ENCODE measurements at regions of chr4 and their contacts with region 1.

Region 1: DNA sequence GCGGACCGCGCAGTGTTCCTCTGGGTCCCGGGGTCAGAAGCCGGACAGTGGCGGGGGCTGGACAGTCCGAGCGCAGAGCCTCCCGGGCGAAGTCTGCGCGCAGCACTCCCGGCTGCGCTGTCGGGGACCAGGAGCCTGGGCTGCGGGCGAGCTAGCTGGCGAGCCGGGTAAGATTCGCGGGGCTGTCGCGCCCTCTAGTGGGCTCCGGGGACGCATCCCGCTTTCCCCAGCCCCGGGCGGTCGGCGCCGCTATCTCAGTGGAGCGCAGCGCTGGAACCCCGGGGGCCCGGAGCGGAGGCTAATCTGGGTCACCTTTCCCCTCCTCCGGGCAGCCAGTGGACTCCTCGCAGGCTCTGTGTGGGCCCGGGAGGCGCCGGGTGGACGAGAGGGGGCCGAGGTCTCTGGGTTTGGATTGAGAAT is 4.2 kb downstream of the PDGFRA start:
- DNase-seq: no peak
- H3K4me3 ChIP-seq: peak overlapping the region; percentile 93
- CTCF ChIP-seq: peak; percentile 86

Region 2: GRCh38 chr4:53196882-53197771 is 1036.2 kb before region 1 on chr4:
- CTCF ChIA-PET with region 1: interaction called, 64 read pairs
- POLR2A ChIA-PET with region 1: no interaction called
- DNase-seq: peak; percentile 56
- H3K4me3 ChIP-seq: peak overlapping the region; percentile 37
- CTCF ChIP-seq: peak; percentile 48

Region 3: DNA sequence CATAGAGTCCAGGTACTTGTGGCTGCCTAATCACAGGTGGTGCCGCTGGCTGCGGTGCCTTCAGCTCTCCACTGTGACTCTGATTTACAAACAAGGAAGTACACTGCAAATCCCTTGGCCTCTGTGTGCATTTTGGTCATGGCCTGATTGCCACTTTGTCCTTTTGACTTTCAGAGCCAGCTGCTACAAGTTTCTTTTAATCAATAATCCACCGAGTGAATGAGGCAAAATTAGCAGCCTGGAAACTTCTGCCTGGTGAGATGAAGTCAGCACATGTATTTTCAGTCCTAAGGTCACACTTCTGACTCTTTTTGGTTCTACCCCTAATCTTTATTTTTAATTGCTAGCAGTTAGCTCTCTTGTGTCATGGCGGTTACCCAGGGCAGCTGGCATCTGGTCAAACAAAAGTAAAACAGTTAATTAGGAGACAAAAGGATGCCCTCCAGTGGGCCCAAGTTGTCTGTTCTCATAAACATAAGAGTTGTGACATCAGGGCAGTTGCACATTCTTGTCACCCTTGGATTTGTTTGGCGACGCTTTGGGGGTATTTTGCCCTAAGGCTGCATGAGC is 579.7 kb before region 1 on chr4:
- CTCF ChIA-PET with region 1: interaction called, 17 read pairs
- POLR2A ChIA-PET with region 1: no interaction called
- DNase-seq: no peak
- H3K4me3 ChIP-seq: no peak overlapping the region
- CTCF ChIP-seq: no peak

Region 4: GRCh38 chr4:53763813-53764597 is 469.3 kb before region 1 on chr4:
- CTCF ChIA-PET with region 1: interaction called, 17 read pairs
- POLR2A ChIA-PET with region 1: no interaction called
- DNase-seq: peak; percentile 78
- H3K4me3 ChIP-seq: peak overlapping the region; percentile 32
- CTCF ChIP-seq: no peak

Region 5: GRCh38 chr4:53914313-53915016 is 318.8 kb before region 1 on chr4:
- CTCF ChIA-PET with region 1: interaction called, 196 read pairs
- POLR2A ChIA-PET with region 1: interaction called, 20 read pairs
- DNase-seq: peak; percentile 47
- H3K4me3 ChIP-seq: no peak overlapping the region
- CTCF ChIP-seq: no peak

Region 6: DNA sequence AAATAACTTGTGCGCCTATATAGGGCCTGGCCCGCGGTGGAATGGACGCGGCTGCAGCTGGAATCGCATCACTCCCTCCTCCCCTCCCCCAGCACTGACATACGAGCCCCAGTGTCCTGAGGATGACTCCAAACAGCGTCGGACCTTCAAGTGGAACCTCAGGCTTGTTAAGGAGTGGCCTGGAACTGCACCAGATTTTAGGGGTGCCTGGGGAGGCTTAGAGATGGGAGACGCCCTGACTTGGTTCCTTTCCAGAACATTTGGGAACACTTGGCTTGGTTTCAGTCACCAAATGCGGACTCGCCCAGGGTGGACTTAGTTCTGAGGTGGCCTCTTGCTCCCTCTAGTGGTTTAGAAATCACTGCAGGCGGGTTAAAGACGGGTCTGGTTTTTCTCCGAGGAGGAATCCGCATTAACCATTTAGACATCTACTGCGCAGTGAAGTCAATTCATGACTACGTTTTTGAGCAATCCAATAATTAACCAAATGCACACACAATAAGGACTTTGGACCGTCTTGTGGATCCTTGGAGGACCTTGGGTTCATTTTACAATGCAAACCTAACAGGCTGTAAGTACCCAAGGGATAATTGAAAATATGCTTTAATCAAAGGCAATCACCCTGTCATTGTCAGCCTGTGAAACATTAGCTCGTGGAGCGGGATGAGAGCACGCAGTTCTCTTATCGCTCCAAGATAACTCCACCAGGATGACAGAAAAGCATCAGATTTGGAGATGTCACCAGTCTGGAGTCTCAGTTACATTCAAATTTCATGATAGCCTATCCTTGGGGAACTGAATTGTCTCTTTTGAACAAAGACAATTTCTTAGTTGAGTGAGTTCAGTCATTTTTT is 15.4 kb before region 1 on chr4:
- CTCF ChIA-PET with region 1: interaction called, 23 read pairs
- POLR2A ChIA-PET with region 1: interaction called, 3 read pairs
- DNase-seq: no peak
- H3K4me3 ChIP-seq: peak overlapping the region; percentile 62
- CTCF ChIP-seq: peak; percentile 76

Region 7: DNA sequence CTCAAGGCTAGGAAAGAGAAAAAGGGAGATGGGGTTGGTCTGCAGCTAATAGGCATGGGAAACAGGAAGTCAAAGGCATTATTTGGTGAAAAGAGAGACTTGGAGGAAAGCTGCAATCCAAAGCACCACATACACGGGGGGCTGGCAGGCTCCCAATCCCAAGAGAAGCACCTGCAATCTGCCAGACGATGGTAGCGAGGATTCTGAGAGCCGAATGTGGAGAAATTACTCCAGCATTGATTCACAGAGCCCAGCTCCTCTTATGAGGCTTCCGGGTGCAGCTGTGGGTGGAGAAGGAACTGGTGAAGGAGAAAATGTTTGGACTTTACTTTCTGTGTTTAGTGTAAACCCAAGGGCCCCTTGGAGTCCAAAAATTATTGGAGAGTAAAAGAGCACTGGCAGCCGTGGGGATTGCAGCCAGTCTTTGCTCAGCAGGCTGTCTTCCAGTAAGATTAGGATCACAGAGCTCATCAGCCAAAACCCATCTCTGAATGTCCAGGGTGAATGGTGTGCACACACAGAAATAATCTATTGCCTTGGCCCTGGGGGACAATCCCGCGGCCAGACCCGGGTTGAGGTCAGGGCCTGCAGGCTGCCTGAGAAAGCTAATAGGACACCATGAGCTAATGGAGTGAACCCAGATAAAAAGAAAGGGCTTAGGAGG is 622.0 kb after region 1 on chr4:
- CTCF ChIA-PET with region 1: no interaction called
- POLR2A ChIA-PET with region 1: no interaction called
- DNase-seq: no peak
- H3K4me3 ChIP-seq: no peak overlapping the region
- CTCF ChIP-seq: no peak